Thyroid gland (tissue), 4 donors: ENCODE measurements at regions of chr4 and their contacts with region 1.

Region 1: DNA sequence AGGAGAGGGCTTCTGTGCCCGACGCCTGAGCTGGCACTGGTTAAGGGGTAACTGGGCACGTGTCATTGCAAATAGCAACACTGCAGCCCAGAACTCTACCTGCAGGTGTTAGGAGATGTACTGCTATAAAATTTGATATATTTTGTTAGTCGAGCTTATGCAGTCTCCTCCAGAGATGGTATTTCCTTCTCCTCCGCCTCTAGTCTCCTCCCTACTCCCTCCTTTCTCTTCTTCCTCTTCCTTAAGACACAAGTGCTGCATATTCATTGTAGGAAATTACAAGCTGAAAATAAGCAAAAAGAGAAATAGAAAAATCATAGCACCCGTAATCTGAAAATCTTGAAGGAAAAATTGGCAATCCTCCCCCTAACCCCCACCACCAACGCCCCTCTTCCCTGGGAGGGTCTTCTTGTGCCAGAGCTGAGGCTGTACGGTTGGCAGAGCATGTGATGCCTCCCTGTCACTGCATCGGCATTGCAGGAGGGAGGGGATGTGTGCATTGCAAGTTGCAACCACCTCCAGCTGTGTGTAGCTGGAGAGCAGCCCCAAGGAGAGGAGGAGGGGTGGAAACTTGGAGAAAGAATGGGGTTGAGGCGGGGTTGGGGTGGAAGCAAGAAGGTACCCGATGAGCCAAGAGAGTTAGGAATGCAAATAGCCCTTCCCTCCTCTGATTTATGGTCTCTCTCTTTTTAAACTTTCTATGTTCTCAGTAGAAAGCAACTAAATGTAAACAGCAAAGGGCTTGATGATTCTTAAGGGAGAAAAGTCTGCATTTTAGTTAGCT is 48.3 kb upstream of the MND1 start:
- DNase-seq: peak in 1 of 2 donors; percentile 30
- H3K4me3 ChIP-seq: no peak overlapping the region
- H3K27ac ChIP-seq: peak overlapping the region in 2 of 3 donors; percentile 19 to 54
- H3K4me1 ChIP-seq: peaks cover 25 to 39% of the 10 kb centered on the region in 2 donors
- H3K27me3 ChIP-seq: no peaks in the 10 kb centered on the region
- CTCF ChIP-seq: no peak
- POLR2A ChIP-seq: no peak

Region 2: GRCh38 chr4:153221783-153222706 is 74.2 kb before region 1 on chr4:
- intact Hi-C with region 1: loop called (anchors 10 kb)
- DNase-seq: peak; percentile 59 to 61
- H3K4me3 ChIP-seq: peak overlapping the region; percentile 61 to 69 (median 64)
- H3K27ac ChIP-seq: peak overlapping the region; percentile 94 to 97 (median 97)
- H3K4me1 ChIP-seq: peaks cover 28 to 32% of the 10 kb centered on the region in 2 donors
- H3K27me3 ChIP-seq: no peaks in the 10 kb centered on the region
- CTCF ChIP-seq: no peak
- POLR2A ChIP-seq: peak; percentile 12 to 48